ENCODE measurements at regions of chr7 and their contacts with region 1.

Region 1: GRCh38 chr7:121485467-121486243 is 89.5 kb upstream of the FAM3C start:
- DNase-seq: peak in 1 of 2 donors; percentile 10
- ATAC-seq: peak in 3 of 8 donors; percentile 22 to 37 (median 25)
- H3K4me3 ChIP-seq: no peak overlapping the region
- H3K27ac ChIP-seq: peak overlapping the region in 1 of 10 donors; percentile 54
- H3K4me1 ChIP-seq: peaks cover 0 to 12% (median 0%) of the 10 kb centered on the region in 9 donors
- H3K27me3 ChIP-seq: no peaks in the 10 kb centered on the region
- CTCF ChIP-seq: no peak

Region 2: GRCh38 chr7:119879835-119880234 is 1605.8 kb before region 1 on chr7:
- intact Hi-C with region 1: no loop called
- DNase-seq: no peak
- ATAC-seq: no peak
- H3K4me3 ChIP-seq: no peak overlapping the region
- H3K27ac ChIP-seq: no peak overlapping the region
- H3K4me1 ChIP-seq: no peaks in the 10 kb centered on the region
- H3K27me3 ChIP-seq: no peaks in the 10 kb centered on the region
- CTCF ChIP-seq: no peak

Region 3: GRCh38 chr7:121428855-121429489 is 56.7 kb before region 1 on chr7:
- intact Hi-C with region 1: loop called in 1 of 10 experiments (anchors 10 kb)
- DNase-seq: no peak
- ATAC-seq: no peak
- H3K4me3 ChIP-seq: no peak overlapping the region
- H3K27ac ChIP-seq: no peak overlapping the region
- H3K4me1 ChIP-seq: no peaks in the 10 kb centered on the region
- H3K27me3 ChIP-seq: peaks cover 0 to 5% (median 0%) of the 10 kb centered on the region in 7 donors
- CTCF ChIP-seq: no peak

Region 4: GRCh38 chr7:121676168-121676567 is 190.5 kb after region 1 on chr7:
- intact Hi-C with region 1: loop called in 1 of 10 experiments (anchors 10 kb)
- DNase-seq: no peak
- ATAC-seq: no peak
- H3K4me3 ChIP-seq: no peak overlapping the region
- H3K27ac ChIP-seq: no peak overlapping the region
- H3K4me1 ChIP-seq: no peaks in the 10 kb centered on the region
- H3K27me3 ChIP-seq: peaks cover 0 to 4% (median 0%) of the 10 kb centered on the region in 7 donors
- CTCF ChIP-seq: no peak

Measured in heart right ventricle (tissue), 16 donors.